ENCODE measurements at regions of chr6 and their contacts with region 1.

Region 1: GRCh38 chr6:154868143-154868594 is 126.9 kb upstream of the TIAM2 start:
- DNase-seq: peak; percentile 64
- H3K4me3 ChIP-seq: no peak overlapping the region
- H3K27ac ChIP-seq: no peak overlapping the region
- H3K4me1 ChIP-seq: no peaks in the 10 kb centered on the region
- CTCF ChIP-seq: peak; percentile 95

Region 2: DNA sequence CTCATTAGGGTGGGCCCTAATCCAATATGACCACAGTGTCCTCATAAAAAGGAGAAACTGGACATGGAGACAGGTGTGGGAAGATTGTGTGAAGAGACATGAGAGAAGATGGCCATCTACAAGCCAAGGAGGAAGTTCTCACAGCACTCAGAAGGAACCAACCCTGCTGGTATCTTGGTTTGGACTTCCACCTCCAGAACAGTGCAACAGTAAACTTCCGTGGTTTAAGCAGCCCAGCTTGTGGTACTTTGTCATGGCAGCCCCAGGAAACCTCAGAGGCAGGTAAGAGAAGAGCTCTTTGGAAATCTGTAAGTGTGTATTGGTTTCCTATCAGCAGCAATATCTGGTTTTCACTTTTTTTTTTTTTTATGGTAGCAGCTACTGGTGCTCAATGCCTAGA is 341.2 kb before region 1 on chr6:
- CTCF ChIA-PET with region 1: no interaction called
- POLR2A ChIA-PET with region 1: no interaction called
- intact Hi-C with region 1: no loop called
- DNase-seq: no peak
- H3K4me3 ChIP-seq: no peak overlapping the region
- H3K27ac ChIP-seq: no peak overlapping the region
- H3K4me1 ChIP-seq: no peaks in the 10 kb centered on the region
- CTCF ChIP-seq: no peak

Region 3: DNA sequence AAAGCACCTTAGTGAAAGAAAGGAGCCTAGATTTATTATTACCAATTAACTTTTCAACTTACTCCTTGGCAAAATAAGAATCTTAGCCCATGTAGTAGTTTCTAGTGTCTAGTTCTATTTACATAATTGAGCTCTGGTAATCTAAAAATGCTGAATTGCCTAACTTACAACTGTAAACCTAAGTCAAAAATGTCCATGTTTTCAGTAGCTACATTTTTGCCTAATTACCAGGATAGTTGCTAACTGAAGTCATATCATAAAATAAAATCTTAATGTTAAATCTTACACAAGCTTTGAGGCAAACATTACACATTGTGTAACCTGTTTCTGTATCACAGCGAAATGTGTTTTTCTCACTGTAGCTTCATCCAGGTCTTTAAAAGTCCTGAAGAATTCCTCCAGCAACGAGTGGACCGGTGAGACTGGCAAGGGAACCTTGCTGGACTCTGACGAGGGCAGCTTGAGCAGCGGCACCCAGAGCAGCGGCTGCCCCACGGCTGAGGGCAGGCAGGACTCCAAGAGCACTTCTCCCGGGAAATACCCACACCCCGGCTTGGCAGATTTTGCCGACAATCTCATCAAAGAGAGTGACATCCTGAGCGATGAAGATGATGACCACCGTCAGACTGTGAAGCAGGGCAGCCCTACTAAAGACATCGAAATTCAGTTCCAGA is 388.1 kb after region 1 on chr6:
- CTCF ChIA-PET with region 1: no interaction called
- POLR2A ChIA-PET with region 1: no interaction called
- intact Hi-C with region 1: loop called (anchors 5 kb)
- DNase-seq: no peak
- H3K4me3 ChIP-seq: no peak overlapping the region
- H3K27ac ChIP-seq: no peak overlapping the region
- H3K4me1 ChIP-seq: no peaks in the 10 kb centered on the region
- CTCF ChIP-seq: no peak